ENCODE measurements at regions of chr1 and their contacts with region 1.

Region 1: DNA sequence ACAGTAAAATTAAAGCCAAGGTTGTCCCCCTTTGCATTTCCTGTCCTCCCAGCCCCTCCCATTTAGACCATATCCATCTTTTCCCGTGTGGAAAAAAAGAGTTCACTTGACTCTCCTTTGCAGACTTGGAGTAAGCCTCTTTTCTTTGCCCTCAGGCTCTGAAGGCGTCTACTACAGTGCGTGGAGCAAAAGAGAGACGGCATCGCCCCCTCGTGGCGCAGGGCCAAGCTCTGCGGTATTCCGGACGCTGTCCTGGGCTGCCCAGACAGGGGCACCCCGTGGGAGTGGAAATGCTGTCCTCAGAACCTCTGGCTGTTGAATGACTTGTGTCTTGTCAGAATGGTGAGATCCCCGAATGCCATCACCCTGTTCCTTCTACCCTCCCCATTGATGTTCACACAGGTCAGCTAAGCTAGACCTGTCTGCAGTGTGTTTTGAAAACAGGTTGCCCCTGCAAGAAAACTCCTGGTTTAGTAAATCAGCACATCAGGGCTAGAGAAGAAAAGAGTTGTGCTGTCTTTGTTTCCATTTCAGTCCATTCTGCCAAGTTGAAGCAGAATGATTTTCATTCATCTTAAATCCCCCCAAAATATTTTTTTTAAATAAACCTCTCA is 12.3 kb upstream of the GJA8 start:
- DNase-seq: peak; percentile 78
- H3K4me3 ChIP-seq: no peak overlapping the region
- H3K27ac ChIP-seq: no peak overlapping the region
- H3K4me1 ChIP-seq: no peaks in the 10 kb centered on the region
- H3K27me3 ChIP-seq: no peaks in the 10 kb centered on the region
- CTCF ChIP-seq: peak; percentile 86 to 89
- POLR2A ChIP-seq: no peak

Region 2: DNA sequence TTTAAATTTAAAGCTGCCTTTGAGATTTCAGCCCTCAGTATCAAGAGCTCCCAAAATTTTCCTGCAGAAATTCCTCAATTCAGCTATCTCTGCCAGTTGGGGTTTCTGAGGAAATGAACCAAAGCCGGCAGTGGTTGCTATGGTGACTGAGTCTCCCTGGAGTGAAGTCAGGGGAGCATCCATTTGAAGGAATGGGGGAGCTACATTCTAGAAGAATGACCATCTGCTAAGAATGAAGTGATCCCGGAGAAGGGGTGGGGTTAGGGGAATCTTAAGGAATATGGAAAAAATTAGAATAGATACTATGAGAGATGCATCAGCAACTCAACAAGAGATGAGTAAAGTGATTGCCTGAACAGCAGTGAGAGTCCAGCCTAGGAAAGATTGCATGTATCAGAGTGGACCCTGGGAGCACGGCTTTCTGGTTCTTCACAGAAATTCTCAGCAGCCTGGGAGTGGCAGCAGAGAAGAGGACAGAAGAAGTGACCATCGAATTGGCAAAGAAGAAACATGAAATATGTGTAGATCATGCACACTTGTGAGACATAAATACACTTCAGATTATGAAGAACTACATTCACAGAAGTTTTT is 553.1 kb before region 1 on chr1:
- CTCF ChIA-PET with region 1: no interaction called
- POLR2A ChIA-PET with region 1: no interaction called
- dilution Hi-C with region 1: no loop called
- intact Hi-C with region 1: no loop called
- DNase-seq: no peak
- H3K4me3 ChIP-seq: no peak overlapping the region
- H3K27ac ChIP-seq: no peak overlapping the region
- H3K4me1 ChIP-seq: no peaks in the 10 kb centered on the region
- H3K27me3 ChIP-seq: peaks cover 0 to 2% of the 10 kb centered on the region in 2 experiments
- CTCF ChIP-seq: no peak
- POLR2A ChIP-seq: no peak

Region 3: GRCh38 chr1:147472966-147473734 is 417.1 kb before region 1 on chr1:
- CTCF ChIA-PET with region 1: no interaction called
- POLR2A ChIA-PET with region 1: no interaction called
- dilution Hi-C with region 1: no loop called
- intact Hi-C with region 1: no loop called
- DNase-seq: no peak
- H3K4me3 ChIP-seq: no peak overlapping the region
- H3K27ac ChIP-seq: no peak overlapping the region
- H3K4me1 ChIP-seq: no peaks in the 10 kb centered on the region
- H3K27me3 ChIP-seq: no peaks in the 10 kb centered on the region
- CTCF ChIP-seq: no peak
- POLR2A ChIP-seq: no peak

Region 4: GRCh38 chr1:147494998-147495580 is 395.2 kb before region 1 on chr1:
- CTCF ChIA-PET with region 1: interaction called, 37 read pairs
- POLR2A ChIA-PET with region 1: no interaction called
- dilution Hi-C with region 1: no loop called
- intact Hi-C with region 1: loop called (anchors 1 kb)
- DNase-seq: peak; percentile 63
- H3K4me3 ChIP-seq: no peak overlapping the region
- H3K27ac ChIP-seq: no peak overlapping the region
- H3K4me1 ChIP-seq: peaks cover 3% of the 10 kb centered on the region
- H3K27me3 ChIP-seq: peaks cover 3 to 9% of the 10 kb centered on the region in 2 experiments
- CTCF ChIP-seq: peak; percentile 84 to 85
- POLR2A ChIP-seq: no peak

Region 5: GRCh38 chr1:147635342-147635741 is 254.9 kb before region 1 on chr1:
- CTCF ChIA-PET with region 1: interaction called, 68 read pairs
- POLR2A ChIA-PET with region 1: no interaction called
- dilution Hi-C with region 1: no loop called
- intact Hi-C with region 1: loop called (anchors 1 kb)
- DNase-seq: no peak
- H3K4me3 ChIP-seq: no peak overlapping the region
- H3K27ac ChIP-seq: no peak overlapping the region
- H3K4me1 ChIP-seq: no peaks in the 10 kb centered on the region
- H3K27me3 ChIP-seq: no peaks in the 10 kb centered on the region
- CTCF ChIP-seq: no peak
- POLR2A ChIP-seq: no peak

Region 6: GRCh38 chr1:147700042-147701006 is 190.0 kb before region 1 on chr1:
- CTCF ChIA-PET with region 1: interaction called, 49 read pairs
- POLR2A ChIA-PET with region 1: no interaction called
- dilution Hi-C with region 1: no loop called
- intact Hi-C with region 1: loop called (anchors 1 kb)
- DNase-seq: peak; percentile 65
- H3K4me3 ChIP-seq: no peak overlapping the region
- H3K27ac ChIP-seq: no peak overlapping the region
- H3K4me1 ChIP-seq: no peaks in the 10 kb centered on the region
- H3K27me3 ChIP-seq: peaks cover 0 to 3% of the 10 kb centered on the region in 2 experiments
- CTCF ChIP-seq: peak; percentile 87
- POLR2A ChIP-seq: no peak

Region 7: GRCh38 chr1:147781056-147781471 is 109.2 kb before region 1 on chr1:
- CTCF ChIA-PET with region 1: interaction called, 29 read pairs
- POLR2A ChIA-PET with region 1: no interaction called
- dilution Hi-C with region 1: no loop called
- intact Hi-C with region 1: loop called (anchors 1 kb)
- DNase-seq: peak; percentile 94
- H3K4me3 ChIP-seq: no peak overlapping the region
- H3K27ac ChIP-seq: peak overlapping the region; percentile 57
- H3K4me1 ChIP-seq: peaks cover 19% of the 10 kb centered on the region
- H3K27me3 ChIP-seq: peaks cover 13 to 19% of the 10 kb centered on the region in 2 experiments
- CTCF ChIP-seq: no peak
- POLR2A ChIP-seq: no peak

Region 8: GRCh38 chr1:147868953-147869352 is 21.3 kb before region 1 on chr1:
- CTCF ChIA-PET with region 1: interaction called, 10 read pairs
- POLR2A ChIA-PET with region 1: no interaction called
- dilution Hi-C with region 1: no loop called
- intact Hi-C with region 1: no loop called
- DNase-seq: no peak
- H3K4me3 ChIP-seq: no peak overlapping the region
- H3K27ac ChIP-seq: no peak overlapping the region
- H3K4me1 ChIP-seq: no peaks in the 10 kb centered on the region
- H3K27me3 ChIP-seq: no peaks in the 10 kb centered on the region
- CTCF ChIP-seq: no peak
- POLR2A ChIP-seq: no peak